Activated B cell treated with CpG ODN at 0.5 μM for 24 hours (primary cell): ENCODE measurements at regions of chr7 and their contacts with region 1.

Region 1: GRCh38 chr7:149422129-149422913 is 38.5 kb downstream of the ZNF777 start:
- DNase-seq: peak; percentile 79
- ATAC-seq: peak; percentile 98
- H3K4me3 Mint-ChIP-seq: peak overlapping the region; percentile 84
- H3K27ac Mint-ChIP-seq: peak overlapping the region; percentile 74
- H3K4me1 Mint-ChIP-seq: peaks cover 8% of the 10 kb centered on the region
- H3K27me3 Mint-ChIP-seq: no peaks in the 10 kb centered on the region
- CTCF ChIP-seq: no peak

Region 2: DNA sequence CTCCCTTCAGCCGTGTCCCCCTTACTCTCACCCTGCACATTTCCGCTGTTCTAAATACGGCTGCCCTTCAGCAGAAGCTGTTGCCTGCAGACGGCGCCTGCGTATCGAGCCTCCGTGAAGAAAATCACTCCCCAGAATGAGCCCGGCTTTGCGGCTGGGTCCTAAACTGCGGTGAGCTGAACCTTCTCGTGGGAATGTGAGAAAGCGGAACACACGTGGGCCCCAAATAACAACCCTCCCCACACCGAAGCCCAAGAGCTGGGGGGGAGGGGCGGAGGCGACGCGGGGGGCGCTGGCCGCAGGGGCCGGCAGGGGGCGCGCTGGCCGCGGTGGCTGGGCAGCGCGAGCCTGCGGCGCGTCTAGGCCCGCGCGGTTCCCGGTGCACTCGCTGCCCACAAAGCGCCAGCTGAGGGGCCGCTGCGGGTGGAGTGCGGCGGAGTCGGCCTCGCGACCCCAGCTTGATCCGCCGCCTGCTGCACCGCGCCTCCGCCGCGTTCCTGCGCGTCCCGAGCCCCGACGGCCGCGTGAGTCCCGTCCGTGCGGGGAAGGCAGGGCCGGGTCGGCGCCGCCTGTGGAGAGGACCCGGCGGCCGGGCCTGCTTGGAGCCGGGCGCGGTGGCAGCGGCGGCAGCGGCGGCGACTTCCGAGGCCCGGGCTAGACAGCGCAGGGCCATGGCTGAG is 275.1 kb before region 1 on chr7 and contains the start of gene ZNF398:
- CTCF ChIA-PET with region 1: no interaction called
- POLR2A ChIA-PET with region 1: no interaction called
- intact Hi-C with region 1: loop called (anchors 1 kb)
- DNase-seq: peak; percentile 87
- ATAC-seq: peak; percentile 84
- H3K4me3 Mint-ChIP-seq: peak within 1 kb of the TSS; percentile 91
- H3K27ac Mint-ChIP-seq: peak within 1 kb of the TSS; percentile 94
- H3K4me1 Mint-ChIP-seq: peaks cover 32% of the 10 kb centered on the region
- H3K27me3 Mint-ChIP-seq: no peaks in the 10 kb centered on the region
- CTCF ChIP-seq: no peak
- total RNA-seq, gene ZNF398: 15.1 and 17.3 TPM in 2 replicates

Region 3: GRCh38 chr7:149261829-149262617 is 160.3 kb before region 1 on chr7 and contains the start of gene ZNF783:
- CTCF ChIA-PET with region 1: interaction called, 9 read pairs
- POLR2A ChIA-PET with region 1: interaction called, 7 read pairs
- intact Hi-C with region 1: loop called (anchors 1 kb)
- DNase-seq: peak; percentile 88
- ATAC-seq: peak; percentile 91
- H3K4me3 Mint-ChIP-seq: peak within 1 kb of the TSS; percentile 89
- H3K27ac Mint-ChIP-seq: peak within 1 kb of the TSS; percentile 90
- H3K4me1 Mint-ChIP-seq: peaks cover 23% of the 10 kb centered on the region
- H3K27me3 Mint-ChIP-seq: no peaks in the 10 kb centered on the region
- CTCF ChIP-seq: no peak
- total RNA-seq, gene ZNF783: 28.5 and 34.1 TPM in 2 replicates

Region 4: GRCh38 chr7:149398195-149398820 is 24.0 kb before region 1 on chr7:
- CTCF ChIA-PET with region 1: no interaction called
- POLR2A ChIA-PET with region 1: no interaction called
- intact Hi-C with region 1: no loop called
- DNase-seq: no peak
- ATAC-seq: no peak
- H3K4me3 Mint-ChIP-seq: no peak overlapping the region
- H3K27ac Mint-ChIP-seq: no peak overlapping the region
- H3K4me1 Mint-ChIP-seq: no peaks in the 10 kb centered on the region
- H3K27me3 Mint-ChIP-seq: peaks cover 37% of the 10 kb centered on the region
- CTCF ChIP-seq: no peak

Region 5: DNA sequence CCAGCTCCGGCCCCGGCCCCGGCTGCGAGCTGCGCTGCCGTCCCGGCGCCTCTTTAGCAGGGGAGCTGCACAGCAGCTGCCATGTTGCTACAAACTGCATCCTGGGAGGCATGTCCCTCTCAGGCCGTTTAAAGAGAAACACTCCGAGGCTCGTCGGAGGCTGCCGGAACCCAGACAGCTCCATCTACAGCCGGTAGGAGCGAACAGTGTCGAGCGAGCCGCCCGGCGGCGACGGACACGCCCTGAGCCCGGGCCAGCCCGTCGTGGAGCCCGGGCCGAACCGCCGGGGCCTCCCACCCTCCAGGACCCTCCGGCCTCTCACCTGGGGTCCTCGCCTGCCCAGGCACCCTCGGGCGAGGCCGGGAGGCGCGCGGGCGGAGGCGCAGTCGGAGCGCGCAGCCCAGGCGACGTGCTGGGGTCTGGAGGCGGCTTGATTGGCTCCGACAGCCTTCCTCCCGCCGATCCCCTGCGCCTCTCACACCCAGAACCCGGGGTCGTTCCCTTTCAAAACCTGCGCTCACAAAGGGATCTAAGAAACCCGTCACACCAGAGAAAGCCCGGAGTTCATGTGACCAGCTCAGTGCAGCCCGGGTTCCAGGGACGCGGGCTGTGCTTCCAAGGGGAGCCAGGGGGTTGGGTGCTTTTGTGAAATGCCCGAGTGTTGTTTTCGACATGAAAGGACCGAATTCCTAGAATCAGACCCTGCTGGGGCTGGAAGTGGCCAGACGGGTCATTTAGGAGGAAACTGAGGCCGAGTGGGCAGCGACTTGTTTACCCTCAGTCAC is 38.4 kb after region 1 on chr7 and contains the start of gene ZNF777:
- CTCF ChIA-PET with region 1: interaction called, 22 read pairs
- POLR2A ChIA-PET with region 1: interaction called, 13 read pairs
- intact Hi-C with region 1: loop called (anchors 1 kb)
- DNase-seq: peak; percentile 69
- ATAC-seq: peak; percentile 97
- H3K4me3 Mint-ChIP-seq: peak within 1 kb of the TSS; percentile 87
- H3K27ac Mint-ChIP-seq: peak within 1 kb of the TSS; percentile 65
- H3K4me1 Mint-ChIP-seq: peaks cover 24% of the 10 kb centered on the region
- H3K27me3 Mint-ChIP-seq: peaks cover 9% of the 10 kb centered on the region
- CTCF ChIP-seq: no peak
- total RNA-seq, gene ZNF777: 14.0 and 16.2 TPM in 2 replicates

Region 6: DNA sequence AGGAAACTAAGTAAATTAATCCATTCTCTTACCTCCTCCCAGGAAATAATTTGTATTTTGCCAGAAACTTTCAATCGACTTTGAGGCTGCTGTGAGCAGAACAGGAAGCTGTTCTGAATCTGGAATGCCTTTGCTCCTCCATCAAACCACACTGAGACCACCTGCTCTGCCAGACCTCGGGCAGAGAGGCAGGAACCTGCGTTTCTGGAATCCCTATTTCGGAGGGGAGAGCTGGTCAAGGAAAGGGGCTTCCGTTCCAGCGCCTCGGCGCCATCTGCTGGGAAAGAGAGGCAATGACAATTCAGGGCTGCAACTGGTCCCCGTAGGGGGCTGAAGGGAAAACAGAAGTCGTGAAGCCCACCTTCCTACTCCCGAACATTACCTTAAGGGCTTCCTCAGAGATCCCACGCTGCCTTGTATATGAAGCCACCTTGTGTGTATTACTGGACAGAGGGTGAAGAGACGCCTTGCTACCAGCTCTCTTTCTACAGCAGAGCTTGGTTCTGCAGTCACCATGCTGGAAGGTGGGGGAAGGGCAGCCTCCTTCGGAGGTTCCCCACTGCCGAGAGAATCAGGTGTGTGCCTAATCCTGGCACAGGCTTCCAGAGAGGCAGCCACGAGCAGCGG is 319.9 kb after region 1 on chr7:
- CTCF ChIA-PET with region 1: interaction called, 3 read pairs
- POLR2A ChIA-PET with region 1: no interaction called
- intact Hi-C with region 1: loop called (anchors 1 kb)
- DNase-seq: peak; percentile 58
- ATAC-seq: peak; percentile 89
- H3K4me3 Mint-ChIP-seq: peak overlapping the region; percentile 76
- H3K27ac Mint-ChIP-seq: no peak overlapping the region
- H3K4me1 Mint-ChIP-seq: peaks cover 10% of the 10 kb centered on the region
- H3K27me3 Mint-ChIP-seq: peaks cover 26% of the 10 kb centered on the region
- CTCF ChIP-seq: peak; percentile 64